Activated CD8-positive, alpha-beta T cell treated with anti-CD3 and anti-CD28 coated beads, Interleukin-2, amount 10 ng/mL, durations not matched to agents 7 days and 5 days (primary cell): ENCODE measurements at regions of chr5 and their contacts with region 1.

Region 1: DNA sequence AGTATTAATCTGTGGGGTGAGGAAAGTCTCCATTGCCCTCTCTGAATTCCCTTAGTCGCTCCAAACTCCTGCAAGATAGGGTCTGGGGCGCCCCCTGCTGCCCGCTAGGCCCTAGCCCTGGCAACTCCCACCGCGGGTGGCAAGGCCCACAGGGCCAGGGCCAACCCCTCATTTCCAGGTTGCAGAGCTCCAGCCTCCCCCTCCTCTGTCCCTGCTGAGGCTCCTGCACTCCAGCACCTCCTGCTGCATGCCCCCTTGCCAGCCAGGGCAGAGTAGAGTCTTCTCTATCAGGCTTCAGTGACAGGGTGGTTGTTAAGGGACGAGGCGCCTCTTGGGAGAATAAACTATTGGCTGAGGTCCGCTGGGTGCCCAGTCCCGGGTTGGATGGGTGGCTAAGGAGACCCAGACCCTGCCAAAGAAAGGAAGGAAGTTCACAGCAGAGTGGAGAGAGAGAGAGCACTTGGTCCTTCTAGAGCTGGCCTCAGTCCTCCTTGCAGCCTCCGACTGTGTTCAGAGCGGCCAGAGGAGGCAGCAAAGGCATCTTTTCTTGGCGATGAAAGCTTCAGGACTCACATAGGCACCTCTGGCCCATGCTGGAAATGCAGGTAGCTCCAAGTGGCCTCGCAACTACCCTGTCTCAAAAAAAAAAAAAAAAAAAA is 45.6 kb downstream of the SAR1B start:
- DNase-seq: peak; percentile 88
- ATAC-seq: peak; percentile 95
- H3K4me3 Mint-ChIP-seq: no peak overlapping the region
- H3K27ac Mint-ChIP-seq: peak overlapping the region; percentile 62
- H3K4me1 Mint-ChIP-seq: peaks cover 17% of the 10 kb centered on the region
- H3K27me3 Mint-ChIP-seq: no peaks in the 10 kb centered on the region

Region 2: GRCh38 chr5:134225618-134226440 is 361.2 kb before region 1 on chr5 and contains the start of gene PPP2CA:
- CTCF ChIA-PET with region 1: interaction called, 16 read pairs
- POLR2A ChIA-PET with region 1: no interaction called
- DNase-seq: peak; percentile 99
- ATAC-seq: peak; percentile 88
- H3K4me3 Mint-ChIP-seq: peak within 1 kb of the TSS; percentile 96
- H3K27ac Mint-ChIP-seq: peak within 1 kb of the TSS; percentile 99
- H3K4me1 Mint-ChIP-seq: peaks cover 41% of the 10 kb centered on the region
- H3K27me3 Mint-ChIP-seq: no peaks in the 10 kb centered on the region
- total RNA-seq, gene PPP2CA: 158 to 167 TPM

Region 3: GRCh38 chr5:134304311-134304710 is 282.7 kb before region 1 on chr5:
- CTCF ChIA-PET with region 1: interaction called, 39 read pairs
- POLR2A ChIA-PET with region 1: no interaction called
- DNase-seq: no peak
- ATAC-seq: no peak
- H3K4me3 Mint-ChIP-seq: no peak overlapping the region
- H3K27ac Mint-ChIP-seq: no peak overlapping the region
- H3K4me1 Mint-ChIP-seq: peaks cover 7% of the 10 kb centered on the region
- H3K27me3 Mint-ChIP-seq: no peaks in the 10 kb centered on the region

Region 4: DNA sequence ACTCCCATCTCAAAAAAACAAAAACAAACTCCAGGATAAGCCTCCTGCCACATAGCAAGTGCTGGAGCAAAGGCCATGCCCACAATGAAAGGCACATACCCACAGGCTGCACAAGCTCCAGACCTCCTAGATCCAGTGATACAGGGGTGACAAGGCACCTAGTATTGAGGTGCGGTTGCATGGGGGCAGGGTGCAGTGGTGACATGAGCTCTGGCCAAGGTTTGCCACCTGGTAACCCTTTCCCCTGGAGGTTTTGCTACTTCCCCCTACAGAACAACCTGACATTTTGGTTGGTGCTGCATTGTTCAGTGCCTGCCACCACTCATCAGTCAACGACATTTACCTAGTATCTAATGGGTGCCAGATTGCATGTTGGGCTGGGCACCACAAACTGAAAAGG is 189.8 kb before region 1 on chr5:
- CTCF ChIA-PET with region 1: interaction called, 10 read pairs
- POLR2A ChIA-PET with region 1: no interaction called
- DNase-seq: no peak
- ATAC-seq: no peak
- H3K4me3 Mint-ChIP-seq: no peak overlapping the region
- H3K27ac Mint-ChIP-seq: no peak overlapping the region
- H3K4me1 Mint-ChIP-seq: no peaks in the 10 kb centered on the region
- H3K27me3 Mint-ChIP-seq: no peaks in the 10 kb centered on the region

Region 5: DNA sequence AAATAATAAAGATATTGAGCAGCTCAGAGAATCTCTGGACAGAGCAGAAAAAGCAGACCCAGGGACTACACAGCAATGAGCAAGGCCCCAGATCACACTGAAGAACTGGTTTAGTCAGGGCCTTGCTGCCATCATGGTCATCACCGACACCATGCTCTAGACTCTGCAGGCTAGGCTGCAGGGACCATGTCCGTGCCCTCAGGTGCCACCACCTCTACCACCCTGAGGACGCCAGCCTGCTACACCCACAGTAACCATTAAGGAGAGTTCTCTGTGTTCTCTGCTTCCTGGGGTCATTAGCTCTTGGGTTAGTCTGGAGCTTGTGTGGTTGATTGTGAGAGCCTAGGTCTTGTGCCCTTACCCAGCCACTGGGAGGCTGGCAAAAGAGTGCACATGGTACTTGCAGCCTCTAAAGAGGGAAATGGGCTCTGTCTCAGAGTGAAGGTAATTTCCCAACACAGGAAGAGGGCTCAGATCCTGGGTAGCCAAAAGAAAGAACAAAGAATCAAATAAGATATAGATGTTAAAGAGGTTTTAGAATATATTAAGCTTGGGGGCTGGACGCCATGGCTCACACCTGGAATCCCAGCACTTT is 93.4 kb before region 1 on chr5:
- CTCF ChIA-PET with region 1: no interaction called
- POLR2A ChIA-PET with region 1: no interaction called
- DNase-seq: no peak
- ATAC-seq: no peak
- H3K4me3 Mint-ChIP-seq: no peak overlapping the region
- H3K27ac Mint-ChIP-seq: no peak overlapping the region
- H3K4me1 Mint-ChIP-seq: no peaks in the 10 kb centered on the region
- H3K27me3 Mint-ChIP-seq: no peaks in the 10 kb centered on the region

Region 6: DNA sequence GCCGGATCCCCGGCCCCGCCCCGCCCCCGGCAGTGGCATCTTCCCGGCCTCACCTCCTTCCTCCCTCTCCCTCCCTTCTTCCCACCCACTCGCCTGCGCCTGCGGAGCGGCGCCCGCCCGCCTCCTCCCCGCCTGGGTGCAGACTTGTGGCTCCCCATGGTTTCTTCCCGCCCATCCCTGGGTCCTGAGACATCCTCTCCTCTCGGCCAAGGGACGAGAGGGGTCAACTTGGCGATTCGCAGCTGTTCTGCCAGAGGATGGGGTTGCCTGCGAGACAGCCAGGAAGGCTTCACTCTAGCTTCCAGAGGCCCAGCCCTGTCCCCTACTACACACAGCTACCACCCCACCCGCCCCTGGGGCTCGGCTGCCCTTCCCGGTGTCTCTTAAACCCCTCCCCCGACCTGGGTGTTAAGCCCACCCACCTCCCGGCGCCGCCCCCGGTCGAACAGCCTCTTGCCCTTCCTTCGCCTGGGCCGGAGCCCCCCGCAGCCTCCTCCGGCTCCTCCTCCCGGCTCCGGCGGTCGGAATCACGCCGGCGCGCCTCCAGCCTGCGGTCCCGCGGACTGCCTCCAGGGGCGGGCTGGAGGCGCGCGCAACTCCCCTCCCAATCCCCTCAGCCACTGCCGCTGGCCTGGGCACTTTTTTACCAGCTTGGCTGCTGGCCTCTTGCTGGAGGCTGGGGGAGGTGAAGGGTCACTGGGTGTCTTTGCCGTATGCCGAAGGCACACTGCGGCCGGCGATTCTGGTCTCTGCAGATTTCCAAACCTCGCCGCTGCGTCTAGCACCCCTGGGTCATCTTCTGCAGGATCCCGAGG is 59.6 kb before region 1 on chr5:
- CTCF ChIA-PET with region 1: interaction called, 12 read pairs
- POLR2A ChIA-PET with region 1: no interaction called
- DNase-seq: peak; percentile 83
- ATAC-seq: peak; percentile 60
- H3K4me3 Mint-ChIP-seq: peak overlapping the region; percentile 88
- H3K27ac Mint-ChIP-seq: peak overlapping the region; percentile 93
- H3K4me1 Mint-ChIP-seq: peaks cover 36% of the 10 kb centered on the region
- H3K27me3 Mint-ChIP-seq: peaks cover under 1% of the 10 kb centered on the region

Region 7: DNA sequence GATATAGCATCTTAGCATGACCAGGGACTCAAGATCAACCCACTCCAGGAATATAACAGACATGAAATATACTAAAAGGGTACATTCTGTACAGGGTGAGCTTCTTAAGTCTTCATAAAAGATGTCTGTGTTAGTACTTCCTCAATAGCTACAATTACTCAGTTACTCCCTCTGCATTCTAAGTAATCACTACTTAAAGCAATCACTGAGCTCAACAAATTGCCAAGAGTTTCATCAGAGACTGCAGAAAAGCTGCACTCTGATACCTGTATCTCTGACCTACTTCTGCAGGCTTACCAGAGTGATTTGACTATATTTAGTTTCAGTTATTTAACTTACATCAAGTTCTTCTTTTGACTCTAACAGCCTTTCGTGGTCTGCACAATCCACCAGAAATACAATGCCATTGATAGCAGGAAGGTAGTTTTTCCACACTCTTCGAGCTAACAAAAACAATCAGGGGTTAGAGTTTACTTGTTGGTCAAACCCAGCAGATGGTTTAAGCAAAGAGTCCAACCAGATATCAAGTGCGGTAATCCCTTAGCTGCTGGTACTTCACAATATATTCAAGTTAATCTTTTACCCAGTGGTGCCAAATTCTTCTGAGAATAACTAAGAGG is 22.3 kb after region 1 on chr5:
- CTCF ChIA-PET with region 1: interaction called, 76 read pairs
- POLR2A ChIA-PET with region 1: interaction called, 3 read pairs
- DNase-seq: no peak
- ATAC-seq: peak; percentile 31
- H3K4me3 Mint-ChIP-seq: no peak overlapping the region
- H3K27ac Mint-ChIP-seq: peak overlapping the region; percentile 58
- H3K4me1 Mint-ChIP-seq: peaks cover 33% of the 10 kb centered on the region
- H3K27me3 Mint-ChIP-seq: no peaks in the 10 kb centered on the region

Region 8: DNA sequence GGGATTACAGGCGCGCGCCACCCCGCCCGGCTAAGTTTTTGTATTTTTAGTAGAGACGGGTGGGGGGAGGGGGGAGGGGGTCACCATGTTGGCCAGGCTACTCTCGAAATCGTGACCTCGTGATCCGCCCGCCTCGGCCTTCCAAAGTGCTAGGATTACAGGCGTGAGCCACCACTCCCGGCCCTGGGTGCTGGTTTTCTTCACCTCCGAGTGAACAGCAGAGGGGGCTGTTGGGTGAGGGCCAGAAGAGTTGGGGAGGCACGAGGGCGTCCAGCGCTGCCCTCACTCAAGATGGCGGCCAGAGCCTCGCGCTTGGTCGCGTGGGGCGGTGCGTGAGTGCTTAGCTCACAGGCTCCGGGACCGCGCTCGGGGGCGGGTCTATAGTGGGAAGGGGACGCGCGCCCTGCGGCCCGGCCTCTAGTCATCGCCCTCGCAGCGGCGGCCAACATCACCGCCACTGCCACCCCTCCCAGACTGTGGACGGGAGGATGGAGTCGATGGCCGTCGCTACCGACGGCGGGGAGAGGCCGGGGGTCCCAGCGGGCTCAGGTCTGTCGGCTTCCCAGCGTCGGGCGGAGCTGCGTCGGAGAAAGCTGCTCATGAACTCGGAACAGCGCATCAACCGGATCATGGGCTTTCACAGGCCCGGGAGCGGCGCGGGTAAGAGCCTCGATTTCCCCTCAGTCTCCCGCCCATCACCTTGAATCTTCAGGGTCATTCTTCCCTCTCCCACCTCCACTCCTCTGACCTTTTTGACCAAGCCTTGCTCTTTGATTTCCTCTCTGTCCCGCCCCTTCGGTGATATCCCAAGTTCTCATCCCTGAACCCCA is 151.4 kb after region 1 on chr5 and contains the start of gene CAMLG:
- CTCF ChIA-PET with region 1: interaction called, 22 read pairs
- POLR2A ChIA-PET with region 1: no interaction called
- DNase-seq: peak; percentile 98
- ATAC-seq: peak; percentile 99
- H3K4me3 Mint-ChIP-seq: peak within 1 kb of the TSS; percentile 84
- H3K27ac Mint-ChIP-seq: peak within 1 kb of the TSS; percentile 93
- H3K4me1 Mint-ChIP-seq: peaks cover 30% of the 10 kb centered on the region
- H3K27me3 Mint-ChIP-seq: no peaks in the 10 kb centered on the region
- total RNA-seq, gene CAMLG: 23.1 TPM

Region 9: DNA sequence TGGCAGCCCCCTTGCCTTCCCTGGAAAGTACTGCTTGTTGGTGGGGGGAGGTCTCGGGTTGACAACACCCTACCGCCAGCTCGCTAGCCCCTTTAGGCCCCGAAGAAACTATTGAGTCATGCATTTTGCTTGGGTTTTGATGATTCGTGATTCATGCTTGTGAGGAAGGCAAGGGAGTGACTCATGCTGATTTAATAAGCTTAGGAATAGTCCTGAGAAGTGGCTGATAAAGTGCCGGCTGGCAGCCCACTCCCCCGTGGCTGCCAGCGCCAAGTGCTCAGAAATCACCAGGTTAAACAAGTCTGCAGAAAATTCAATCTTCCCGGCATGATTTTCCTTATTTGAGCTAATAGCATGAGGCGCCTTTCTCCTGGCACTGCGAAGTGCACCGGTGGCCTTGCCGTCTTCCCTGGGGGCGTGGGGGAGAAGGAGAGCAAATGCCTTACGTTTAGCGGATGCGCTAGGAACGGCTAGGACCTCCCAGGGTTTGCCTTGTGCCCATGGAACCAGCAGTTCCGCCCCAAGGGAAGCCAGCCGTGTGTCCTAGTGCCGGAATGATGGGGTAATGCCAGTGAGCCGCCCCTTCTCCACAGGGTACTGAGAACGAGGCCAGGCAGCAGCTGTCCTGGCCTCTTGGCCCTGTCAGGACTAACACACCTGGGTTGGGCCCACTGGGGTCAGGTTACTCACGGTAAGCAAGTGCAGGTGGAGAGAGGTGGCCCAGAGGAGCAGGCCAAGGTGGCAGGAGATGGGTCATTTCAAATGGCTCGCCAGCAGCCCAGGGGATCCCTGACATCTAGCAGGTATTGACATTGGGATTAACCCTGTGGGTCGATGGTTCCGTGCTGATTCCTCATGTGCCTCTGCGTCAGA is 660.2 kb after region 1 on chr5:
- CTCF ChIA-PET with region 1: no interaction called
- POLR2A ChIA-PET with region 1: no interaction called
- DNase-seq: no peak
- ATAC-seq: no peak
- H3K4me3 Mint-ChIP-seq: no peak overlapping the region
- H3K27ac Mint-ChIP-seq: no peak overlapping the region
- H3K4me1 Mint-ChIP-seq: peaks cover 3% of the 10 kb centered on the region
- H3K27me3 Mint-ChIP-seq: peaks cover 7% of the 10 kb centered on the region